ENCODE measurements at regions of chr9 and their contacts with region 1.

Region 1: DNA sequence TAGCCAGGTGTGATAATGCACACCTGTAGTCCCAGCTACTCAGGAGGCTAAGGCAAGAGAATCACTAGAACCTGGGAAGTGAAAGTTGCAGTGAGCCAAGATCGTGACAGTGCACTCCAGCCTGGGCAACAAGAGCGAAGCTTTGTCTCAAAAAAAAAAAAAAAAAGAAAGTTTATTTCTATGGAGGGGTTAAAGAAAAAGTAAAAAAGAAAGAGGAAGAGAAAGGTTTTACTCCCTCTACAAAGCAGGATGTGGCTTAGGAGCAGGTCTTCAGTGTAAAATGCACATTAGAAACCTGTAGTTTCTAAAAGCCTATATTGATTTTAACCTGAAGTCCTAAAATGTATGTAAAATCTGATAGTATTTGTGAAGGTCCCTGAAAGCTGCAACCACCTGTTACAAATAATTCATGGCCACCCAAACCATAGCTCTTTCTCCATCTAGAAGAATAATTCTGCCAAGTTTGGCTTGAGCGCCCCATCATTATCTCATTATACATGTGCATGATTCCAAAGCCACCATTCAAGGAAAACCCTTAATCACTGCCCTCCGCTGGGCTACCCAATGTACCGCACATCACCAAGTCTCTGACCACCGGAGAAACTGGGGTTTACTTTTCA is 3.4 kb downstream of the FNBP1 start:
- DNase-seq: no peak
- H3K4me3 ChIP-seq: no peak overlapping the region
- H3K27ac ChIP-seq: no peak overlapping the region
- H3K4me1 ChIP-seq: peaks cover 0 to 5% (median 3%) of the 10 kb centered on the region in 4 experiments; a peak in 4 of 7 replicates
- H3K27me3 ChIP-seq: peaks cover 0 to 9% (median 4%) of the 10 kb centered on the region in 4 experiments; a peak in 4 of 7 replicates
- CTCF ChIP-seq: peak in 2 of 3 experiments; percentile 15 to 31; a peak in 2 of 4 replicates
- EP300 ChIP-seq: no peak
- POLR2A ChIP-seq: no peak
- RAD21 ChIP-seq: peak; percentile 34 to 35

Region 2: GRCh38 chr9:129884220-129885017 is 155.2 kb before region 1 on chr9:
- CTCF ChIA-PET with region 1: interaction called, 10 read pairs
- POLR2A ChIA-PET with region 1: interaction called, 3 read pairs
- DNase-seq: peak; percentile 79 to 92
- H3K4me3 ChIP-seq: peak overlapping the region in 3 of 4 experiments; percentile 10 to 46 (median 17); a peak in 6 of 8 replicates
- H3K27ac ChIP-seq: no peak overlapping the region
- H3K4me1 ChIP-seq: peaks cover 0 to 25% (median 20%) of the 10 kb centered on the region in 4 experiments; a peak in 6 of 7 replicates
- H3K27me3 ChIP-seq: no peaks in the 10 kb centered on the region
- CTCF ChIP-seq: no peak
- EP300 ChIP-seq: no peak
- POLR2A ChIP-seq: peak in 1 of 2 experiments; percentile 83; a peak in 2 of 3 replicates
- RAD21 ChIP-seq: peak in 1 of 2 experiments; percentile 20; a peak in 1 of 4 replicates